Ascending aorta (tissue), 2 donors: ENCODE measurements at regions of chr5 and their contacts with region 1.

Region 1: DNA sequence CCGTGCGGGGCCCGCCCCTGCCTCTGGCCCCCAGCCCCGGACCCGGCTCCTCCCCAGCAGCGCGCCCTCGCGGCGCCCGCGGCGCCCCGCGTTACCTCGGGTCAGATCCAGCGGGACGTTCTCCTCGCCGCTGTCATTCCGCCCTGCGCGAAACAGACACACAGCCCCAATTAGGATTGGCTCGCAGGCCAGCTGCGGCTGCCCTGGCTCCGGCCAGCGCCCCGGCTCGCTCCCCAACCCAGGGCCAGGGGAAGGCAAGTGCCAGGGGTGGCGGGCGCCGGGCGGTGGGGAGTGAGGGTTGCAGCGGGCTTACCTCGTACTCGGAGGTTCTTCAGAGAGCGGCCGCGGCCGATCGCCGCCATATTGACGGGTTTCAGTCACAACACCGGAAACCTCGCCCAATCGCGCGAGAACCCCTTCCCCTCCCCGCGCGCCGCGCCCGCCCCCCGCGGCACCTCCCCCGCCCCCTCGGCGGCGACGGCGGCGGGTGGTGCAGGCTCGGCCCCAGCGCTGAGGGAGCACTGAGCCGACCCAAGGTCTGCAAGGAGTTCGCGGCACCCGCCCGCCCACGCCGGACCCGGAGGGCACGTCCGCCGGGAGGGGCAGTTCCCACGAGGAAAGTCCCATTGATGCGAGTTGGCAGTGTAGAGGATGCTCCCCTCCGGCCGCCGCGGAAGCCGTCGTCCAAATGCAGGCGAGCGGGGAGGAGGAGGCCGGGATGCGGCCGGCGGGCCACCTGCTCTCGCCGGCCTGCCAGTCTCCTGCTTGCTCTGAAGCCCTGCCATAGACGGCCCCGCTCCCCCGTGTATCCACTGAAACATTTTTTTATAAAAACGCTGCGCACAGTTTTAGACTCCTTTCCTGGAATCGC is at the start of gene RICTOR:
- DNase-seq: peak; percentile 54 to 93
- H3K4me3 ChIP-seq: peak within 1 kb of the TSS; percentile 89 to 90
- H3K27ac ChIP-seq: peak within 1 kb of the TSS; percentile 97 to 99
- H3K4me1 ChIP-seq: peaks cover 0 to 20% of the 10 kb centered on the region in 2 donors
- H3K27me3 ChIP-seq: no peaks in the 10 kb centered on the region
- CTCF ChIP-seq: no peak
- total RNA-seq, gene RICTOR: 12.1 TPM

Region 2: GRCh38 chr5:38467353-38468040 is 606.8 kb before region 1 on chr5:
- intact Hi-C with region 1: loop called (anchors 5 kb)
- DNase-seq: peak in 1 of 2 donors; percentile 91
- H3K4me3 ChIP-seq: peak overlapping the region in 1 of 2 donors; percentile 41
- H3K27ac ChIP-seq: peak overlapping the region; percentile 91 to 95
- H3K4me1 ChIP-seq: peaks cover 32 to 66% of the 10 kb centered on the region in 2 donors
- H3K27me3 ChIP-seq: no peaks in the 10 kb centered on the region
- CTCF ChIP-seq: no peak

Region 3: DNA sequence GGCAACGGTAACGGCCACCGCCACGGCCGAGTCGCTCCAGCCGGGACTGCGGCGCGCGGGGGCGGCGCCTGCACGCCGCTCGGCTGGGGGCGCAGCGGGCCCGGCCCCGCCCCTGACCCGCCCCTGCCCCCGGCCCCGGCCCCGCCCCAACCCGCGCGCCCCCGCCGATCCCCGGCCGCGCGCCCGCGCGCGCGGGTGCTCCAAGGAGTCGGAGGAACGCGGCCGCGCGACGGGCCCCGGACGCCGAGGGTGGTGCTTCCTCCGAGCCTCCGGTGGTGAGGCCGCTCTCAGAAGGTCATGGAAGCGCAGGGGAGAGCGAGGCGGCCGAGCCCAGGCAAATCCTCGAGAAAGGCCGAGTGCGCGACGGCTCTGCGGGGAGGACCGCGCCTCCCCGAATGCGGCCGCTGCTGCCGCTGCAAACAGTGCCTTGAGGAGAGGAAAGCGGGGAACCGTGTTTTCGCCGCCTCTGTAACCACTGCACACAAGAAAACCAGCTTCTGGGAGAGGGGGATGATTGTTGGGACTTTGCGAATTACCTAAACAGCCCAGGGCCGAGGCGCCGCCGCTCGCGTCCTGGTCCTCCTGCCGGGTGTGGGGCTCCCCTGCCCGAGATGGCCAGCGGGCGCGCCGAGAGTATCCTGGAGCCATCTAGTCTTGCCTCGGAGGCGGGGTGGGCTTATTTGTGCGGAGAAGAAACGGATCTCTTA is 517.5 kb before region 1 on chr5 and contains the start of gene LIFR:
- intact Hi-C with region 1: loop called (anchors 10 kb)
- DNase-seq: peak in 1 of 2 donors; percentile 86
- H3K4me3 ChIP-seq: peak within 1 kb of the TSS; percentile 78 to 91
- H3K27ac ChIP-seq: peak within 1 kb of the TSS; percentile 91 to 99
- H3K4me1 ChIP-seq: peaks cover 0 to 9% of the 10 kb centered on the region in 2 donors
- H3K27me3 ChIP-seq: no peaks in the 10 kb centered on the region
- CTCF ChIP-seq: no peak
- total RNA-seq, gene LIFR: 116 TPM

Region 4: GRCh38 chr5:39014544-39014943 is 59.7 kb before region 1 on chr5:
- intact Hi-C with region 1: loop called (anchors 2 kb)
- DNase-seq: no peak
- H3K4me3 ChIP-seq: no peak overlapping the region
- H3K27ac ChIP-seq: peak overlapping the region; percentile 87
- H3K4me1 ChIP-seq: peaks cover 0 to 21% of the 10 kb centered on the region in 2 donors
- H3K27me3 ChIP-seq: no peaks in the 10 kb centered on the region
- CTCF ChIP-seq: no peak

Region 5: GRCh38 chr5:39040875-39041274 is 33.4 kb before region 1 on chr5:
- intact Hi-C with region 1: no loop called
- DNase-seq: no peak
- H3K4me3 ChIP-seq: no peak overlapping the region
- H3K27ac ChIP-seq: no peak overlapping the region
- H3K4me1 ChIP-seq: no peaks in the 10 kb centered on the region
- H3K27me3 ChIP-seq: no peaks in the 10 kb centered on the region
- CTCF ChIP-seq: no peak

Region 6: GRCh38 chr5:39399135-39400036 is 325.1 kb after region 1 on chr5:
- intact Hi-C with region 1: loop called (anchors 10 kb)
- DNase-seq: peak; percentile 35 to 71
- H3K4me3 ChIP-seq: no peak overlapping the region
- H3K27ac ChIP-seq: peak overlapping the region; percentile 79 to 91
- H3K4me1 ChIP-seq: peaks cover 3 to 28% of the 10 kb centered on the region in 2 donors
- H3K27me3 ChIP-seq: no peaks in the 10 kb centered on the region
- CTCF ChIP-seq: no peak